Activated CD8-positive, alpha-beta T cell treated with anti-CD3 and anti-CD28 coated beads for 36 hours (primary cell): ENCODE measurements at regions of chr3 and their contacts with region 1.

Region 1: GRCh38 chr3:119279101-119279554 is 15.1 kb upstream of the ARHGAP31 start:
- DNase-seq: no peak
- ATAC-seq: no peak
- H3K4me3 Mint-ChIP-seq: no peak overlapping the region
- H3K27ac Mint-ChIP-seq: no peak overlapping the region
- H3K4me1 Mint-ChIP-seq: peaks cover 10% of the 10 kb centered on the region
- H3K27me3 Mint-ChIP-seq: no peaks in the 10 kb centered on the region
- CTCF ChIP-seq: no peak

Region 2: DNA sequence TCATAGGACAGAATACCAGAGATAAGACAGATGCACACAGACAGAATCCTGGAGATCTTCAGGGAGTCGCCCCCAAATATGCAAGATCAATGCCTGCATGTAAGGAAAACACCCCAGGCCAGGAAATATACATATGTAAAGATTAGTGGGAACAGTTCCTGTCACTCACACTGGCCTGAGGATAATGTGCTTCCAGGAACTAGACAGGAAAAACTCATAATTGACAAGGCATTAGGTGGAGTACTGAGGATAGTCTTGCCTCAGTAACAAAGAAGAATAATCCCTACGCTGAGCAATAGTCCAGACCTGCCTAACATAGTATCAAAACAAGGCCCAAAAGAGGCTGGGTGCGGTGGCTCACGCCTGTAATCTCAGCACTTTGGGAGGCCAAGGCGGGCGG is 18.1 kb before region 1 on chr3:
- CTCF ChIA-PET with region 1: interaction called, 12 read pairs
- POLR2A ChIA-PET with region 1: no interaction called
- intact Hi-C with region 1: no loop called
- DNase-seq: no peak
- ATAC-seq: no peak
- H3K4me3 Mint-ChIP-seq: no peak overlapping the region
- H3K27ac Mint-ChIP-seq: no peak overlapping the region
- H3K4me1 Mint-ChIP-seq: no peaks in the 10 kb centered on the region
- H3K27me3 Mint-ChIP-seq: peaks cover 1% of the 10 kb centered on the region
- CTCF ChIP-seq: no peak

Region 3: DNA sequence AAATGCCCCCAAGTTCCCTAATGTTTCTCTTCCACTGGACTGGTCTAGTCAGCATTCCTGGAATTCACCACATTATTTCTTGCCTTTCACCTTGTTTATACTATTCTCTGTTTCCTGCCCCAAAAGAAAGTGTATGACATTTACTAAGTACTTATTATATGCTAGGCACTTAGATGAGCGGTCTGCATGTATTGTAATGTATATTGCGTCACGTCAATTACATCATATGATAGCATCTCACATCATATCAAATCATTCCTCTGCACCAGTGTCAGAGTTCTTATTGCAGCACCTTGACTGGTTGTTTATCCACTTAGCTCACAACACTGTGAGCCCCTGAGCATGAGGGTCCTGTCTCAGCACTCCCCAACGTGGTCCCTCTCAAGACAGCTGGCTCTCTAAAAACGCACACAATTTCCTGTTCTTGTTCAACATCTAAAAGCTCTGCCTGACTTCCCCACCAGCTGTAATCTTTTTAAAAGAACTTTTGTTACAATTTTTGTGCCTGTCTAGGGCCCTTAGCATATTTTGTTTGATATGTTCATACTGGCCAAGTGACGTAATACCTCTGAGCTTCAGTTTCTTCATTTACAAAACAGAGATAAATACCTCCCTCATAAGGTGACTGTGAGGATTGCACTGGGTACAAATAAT is 73.8 kb after region 1 on chr3:
- CTCF ChIA-PET with region 1: interaction called, 41 read pairs
- POLR2A ChIA-PET with region 1: interaction called, 3 read pairs
- intact Hi-C with region 1: loop called (anchors 5 kb)
- DNase-seq: peak; percentile 23
- ATAC-seq: peak; percentile 61
- H3K4me3 Mint-ChIP-seq: no peak overlapping the region
- H3K27ac Mint-ChIP-seq: peak overlapping the region; percentile 45
- H3K4me1 Mint-ChIP-seq: peaks cover 31% of the 10 kb centered on the region
- H3K27me3 Mint-ChIP-seq: no peaks in the 10 kb centered on the region
- CTCF ChIP-seq: peak; percentile 42

Region 4: DNA sequence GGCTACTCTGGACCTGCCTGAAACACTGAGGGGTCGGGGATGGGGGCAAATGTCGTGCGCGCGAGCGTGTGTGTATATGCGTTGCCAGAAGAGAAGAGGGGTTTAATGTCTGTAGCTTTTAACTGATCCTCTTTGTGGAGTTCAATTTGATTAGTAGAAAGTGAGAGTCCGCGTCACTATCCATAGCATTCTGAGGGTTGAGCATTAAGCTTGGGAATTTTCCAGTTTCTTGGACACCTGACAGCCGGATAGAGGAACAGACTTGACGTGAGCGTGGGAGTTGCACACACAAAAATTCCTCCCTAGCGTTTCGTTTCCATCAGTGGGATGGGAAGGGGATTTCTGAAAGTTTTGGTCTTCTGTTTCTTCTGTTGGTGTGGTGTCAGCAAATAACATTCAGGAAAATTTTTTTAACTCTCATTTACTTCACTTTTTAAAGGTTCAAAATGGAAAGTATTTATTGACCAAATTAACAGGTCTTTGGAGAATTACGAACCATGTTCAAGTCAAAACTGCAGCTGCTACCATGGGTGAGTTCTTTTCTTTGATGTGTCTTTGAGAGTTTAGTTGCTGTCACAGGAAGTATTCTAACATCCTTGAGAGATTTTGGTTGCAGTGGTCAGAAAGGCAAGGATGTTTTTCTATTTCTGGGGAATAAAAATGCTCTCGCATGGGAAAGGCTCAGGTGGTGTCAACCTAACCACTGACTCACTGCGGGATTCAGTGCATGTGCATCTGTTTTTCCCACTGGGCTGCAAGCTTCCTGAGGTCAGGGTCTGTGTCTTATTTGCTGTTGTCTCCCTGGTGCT is 190.5 kb after region 1 on chr3:
- CTCF ChIA-PET with region 1: interaction called, 10 read pairs
- POLR2A ChIA-PET with region 1: no interaction called
- intact Hi-C with region 1: no loop called
- DNase-seq: peak; percentile 51
- ATAC-seq: peak; percentile 38
- H3K4me3 Mint-ChIP-seq: peak overlapping the region; percentile 95
- H3K27ac Mint-ChIP-seq: peak overlapping the region; percentile 97
- H3K4me1 Mint-ChIP-seq: peaks cover 35% of the 10 kb centered on the region
- H3K27me3 Mint-ChIP-seq: no peaks in the 10 kb centered on the region
- CTCF ChIP-seq: no peak